MCF 10A (cell line): ENCODE measurements at regions of chr7 and their contacts with region 1.

Region 1: DNA sequence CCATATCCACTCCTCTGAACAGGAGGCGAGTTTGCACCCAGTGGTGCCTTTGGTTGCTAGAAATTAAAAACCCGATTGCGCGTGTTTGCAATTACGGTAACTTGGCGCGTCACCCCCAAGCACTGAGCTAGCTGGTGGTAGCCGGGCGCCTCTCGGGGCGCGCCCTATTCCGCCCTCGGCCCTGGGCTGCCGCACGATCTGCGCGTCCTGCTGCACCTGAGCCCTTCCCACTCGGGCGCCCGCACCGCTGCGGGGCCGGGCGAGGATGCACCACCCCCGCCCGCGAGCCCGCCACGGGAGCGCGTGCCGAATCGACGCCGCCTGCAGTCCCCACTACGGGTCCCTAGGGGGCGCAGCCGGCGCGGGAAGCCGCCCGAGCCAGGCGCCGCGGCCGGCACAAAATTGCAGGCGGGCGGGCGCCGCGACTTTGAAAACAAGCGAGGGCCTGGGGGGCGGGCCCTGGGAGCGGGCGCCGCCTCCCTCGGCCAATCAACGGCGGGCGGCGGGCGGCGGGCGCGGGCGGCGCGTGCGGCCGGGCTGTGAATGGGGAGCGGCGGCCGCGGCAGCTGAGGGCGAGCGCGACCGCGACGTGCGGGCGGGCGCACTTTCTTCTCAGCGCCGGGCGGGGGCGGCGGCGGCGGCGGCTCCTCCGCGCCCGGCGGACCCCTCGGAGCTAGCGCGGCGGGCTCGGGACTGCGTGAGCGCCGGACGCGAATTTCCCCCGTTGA is at the start of gene SDK1:
- DNase-seq: peak; percentile 67
- H3K4me3 Mint-ChIP-seq: peak within 1 kb of the TSS; percentile 53
- H3K27ac Mint-ChIP-seq: no peak within 1 kb of the TSS
- H3K4me1 Mint-ChIP-seq: no peaks in the 10 kb centered on the region
- H3K27me3 Mint-ChIP-seq: peaks cover 9% of the 10 kb centered on the region
- CTCF ChIP-seq: peak; percentile 83
- total RNA-seq, gene SDK1: 1.5 and 3.3 TPM in 2 replicates

Region 2: DNA sequence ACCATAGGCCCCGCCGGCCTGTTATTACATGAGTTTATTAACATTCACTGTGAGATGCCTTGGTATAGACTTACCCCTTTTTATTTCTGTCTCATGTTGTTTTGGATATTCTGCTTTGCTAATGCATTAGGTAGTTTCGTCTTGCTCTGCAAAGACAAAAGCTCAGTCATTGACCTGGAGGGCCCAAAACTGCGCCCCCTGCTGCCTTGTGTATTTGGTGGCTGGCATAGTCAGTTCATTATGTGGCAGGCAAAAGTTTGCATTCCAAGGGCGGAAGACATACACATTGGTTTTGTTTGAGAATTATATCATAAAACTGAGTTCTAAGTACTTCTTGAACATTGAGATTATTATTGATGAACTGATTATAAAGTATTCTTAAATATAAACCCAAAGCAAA is 372.7 kb after region 1 on chr7:
- CTCF ChIA-PET with region 1: no interaction called
- POLR2A ChIA-PET with region 1: no interaction called
- intact Hi-C with region 1: loop called (anchors 2 kb)
- DNase-seq: peak; percentile 60
- H3K4me3 Mint-ChIP-seq: no peak overlapping the region
- H3K27ac Mint-ChIP-seq: no peak overlapping the region
- H3K4me1 Mint-ChIP-seq: no peaks in the 10 kb centered on the region
- H3K27me3 Mint-ChIP-seq: no peaks in the 10 kb centered on the region
- CTCF ChIP-seq: peak; percentile 41